Mammary epithelial cell (primary cell): ENCODE measurements at regions of chr18 and their contacts with region 1.

Region 1: DNA sequence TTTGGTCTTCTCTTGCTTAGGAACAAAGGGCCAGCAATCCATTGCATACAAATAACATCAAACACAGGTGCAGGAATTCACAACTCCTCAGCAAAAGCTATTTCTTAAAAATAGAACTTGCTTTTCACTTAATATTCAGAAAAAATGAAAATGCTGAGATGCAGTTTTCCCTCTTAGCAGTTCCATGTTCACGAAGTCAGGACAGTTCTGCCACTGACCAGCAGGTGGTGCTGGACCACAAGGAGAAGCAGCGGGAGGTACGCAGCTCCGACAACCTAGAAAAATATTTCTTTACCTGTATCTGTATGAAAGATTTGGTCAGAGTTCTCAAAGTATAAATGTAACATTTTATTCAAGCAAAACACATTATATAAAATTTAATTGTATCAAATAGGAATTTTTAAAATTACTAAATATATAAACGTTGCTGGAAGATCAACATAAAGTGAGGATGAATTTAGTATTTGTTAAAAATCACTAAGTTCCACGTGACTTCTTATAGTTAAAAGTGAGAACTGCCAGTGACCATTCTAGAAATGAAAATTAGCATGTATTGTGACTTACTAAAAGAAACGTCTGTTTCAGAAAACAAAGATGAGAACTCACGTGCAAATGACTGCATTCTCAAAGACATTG is 48.8 kb downstream of the ADNP2 start:
- DNase-seq: peak; percentile 48
- H3K4me3 ChIP-seq: no peak overlapping the region
- H3K27ac ChIP-seq: no peak overlapping the region
- H3K4me1 ChIP-seq: no peaks in the 10 kb centered on the region
- H3K27me3 ChIP-seq: no peaks in the 10 kb centered on the region
- CTCF ChIP-seq: peak; percentile 97 to 99

Region 2: DNA sequence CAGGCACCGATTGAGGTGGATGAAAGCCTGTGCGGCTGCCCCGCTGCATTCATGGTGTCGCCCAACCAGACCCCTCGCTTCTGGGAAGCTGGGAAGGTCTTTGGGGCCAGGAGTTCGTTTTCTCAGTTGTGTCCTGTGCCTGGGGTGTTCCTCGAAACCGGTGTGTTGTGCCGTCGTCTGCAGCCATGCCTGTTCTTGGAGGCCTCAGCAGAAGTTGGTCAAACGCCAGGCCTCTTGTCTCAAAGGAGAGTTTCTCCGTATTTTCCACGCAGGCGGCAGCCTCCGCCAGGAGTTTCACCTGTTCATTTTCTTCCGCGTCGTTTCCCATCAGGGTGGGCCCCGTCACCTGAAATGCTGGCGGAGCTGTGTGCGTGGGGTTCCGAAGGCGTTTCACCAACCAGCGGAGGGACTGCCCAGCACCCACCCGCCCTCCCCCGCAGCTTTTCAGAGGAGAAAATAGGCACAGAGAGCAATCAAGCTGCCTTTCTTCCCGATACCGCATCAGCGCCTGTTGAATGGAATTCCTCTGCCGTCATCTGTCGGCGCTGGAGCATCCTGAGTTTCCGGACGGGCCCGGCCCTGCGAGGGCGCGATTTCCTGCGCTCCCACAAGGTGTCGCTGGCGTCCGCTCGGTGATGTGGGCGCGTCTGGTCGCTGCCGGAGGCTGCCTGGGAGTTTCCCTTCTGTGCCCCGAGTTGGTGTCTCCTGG is 779.1 kb before region 1 on chr18:
- CTCF ChIA-PET with region 1: no interaction called
- dilution Hi-C with region 1: no loop called
- in situ Hi-C with region 1: no loop called
- intact Hi-C with region 1: loop called (anchors 1 kb)
- DNase-seq: peak; percentile 71
- H3K4me3 ChIP-seq: no peak overlapping the region
- H3K27ac ChIP-seq: no peak overlapping the region
- H3K4me1 ChIP-seq: no peaks in the 10 kb centered on the region
- H3K27me3 ChIP-seq: no peaks in the 10 kb centered on the region
- CTCF ChIP-seq: peak; percentile 80 to 97

Region 3: DNA sequence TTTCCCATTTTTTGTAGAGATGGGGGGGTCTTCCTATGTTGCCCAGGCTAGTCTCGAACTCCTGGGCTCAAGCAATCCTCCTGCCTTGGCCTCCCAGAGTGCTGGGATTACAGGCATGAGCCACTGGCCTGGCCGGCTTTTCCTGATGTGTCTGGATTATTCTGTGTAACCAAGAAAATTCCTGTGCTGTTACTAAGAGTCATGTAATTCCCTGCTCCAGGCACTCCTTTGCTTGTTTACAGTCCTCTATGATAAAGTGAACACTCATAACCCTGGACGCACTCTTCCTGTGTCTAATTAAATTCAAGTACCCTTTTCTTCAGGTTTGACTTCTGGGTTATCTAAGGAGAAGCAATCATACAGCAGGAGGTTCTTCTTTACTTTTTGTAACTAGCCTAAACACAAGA is 493.1 kb before region 1 on chr18:
- CTCF ChIA-PET with region 1: no interaction called
- dilution Hi-C with region 1: no loop called
- in situ Hi-C with region 1: no loop called
- intact Hi-C with region 1: no loop called
- DNase-seq: peak; percentile 66
- H3K4me3 ChIP-seq: no peak overlapping the region
- H3K27ac ChIP-seq: no peak overlapping the region
- H3K4me1 ChIP-seq: no peaks in the 10 kb centered on the region
- H3K27me3 ChIP-seq: peaks cover 3% of the 10 kb centered on the region
- CTCF ChIP-seq: no peak

Region 4: GRCh38 chr18:79790996-79791972 is 366.5 kb before region 1 on chr18:
- CTCF ChIA-PET with region 1: no interaction called
- dilution Hi-C with region 1: no loop called
- in situ Hi-C with region 1: no loop called
- intact Hi-C with region 1: loop called (anchors 10 kb)
- DNase-seq: peak; percentile 77
- H3K4me3 ChIP-seq: no peak overlapping the region
- H3K27ac ChIP-seq: no peak overlapping the region
- H3K4me1 ChIP-seq: peaks cover 22% of the 10 kb centered on the region
- H3K27me3 ChIP-seq: peaks cover 6% of the 10 kb centered on the region
- CTCF ChIP-seq: no peak

Region 5: GRCh38 chr18:80171054-80171872 is 13.4 kb after region 1 on chr18:
- CTCF ChIA-PET with region 1: no interaction called
- dilution Hi-C with region 1: no loop called
- in situ Hi-C with region 1: no loop called
- intact Hi-C with region 1: loop called (anchors 1 kb)
- DNase-seq: peak; percentile 38
- H3K4me3 ChIP-seq: peak overlapping the region in 1 of 3 experiments; percentile 30
- H3K27ac ChIP-seq: no peak overlapping the region
- H3K4me1 ChIP-seq: peaks cover 30% of the 10 kb centered on the region
- H3K27me3 ChIP-seq: no peaks in the 10 kb centered on the region
- CTCF ChIP-seq: peak; percentile 85 to 98

Region 6: GRCh38 chr18:80200171-80200931 is 42.5 kb after region 1 on chr18:
- CTCF ChIA-PET with region 1: no interaction called
- dilution Hi-C with region 1: no loop called
- in situ Hi-C with region 1: no loop called
- intact Hi-C with region 1: loop called (anchors 1 kb)
- DNase-seq: no peak
- H3K4me3 ChIP-seq: no peak overlapping the region
- H3K27ac ChIP-seq: no peak overlapping the region
- H3K4me1 ChIP-seq: peaks cover 17% of the 10 kb centered on the region
- H3K27me3 ChIP-seq: no peaks in the 10 kb centered on the region
- CTCF ChIP-seq: no peak

Region 7: DNA sequence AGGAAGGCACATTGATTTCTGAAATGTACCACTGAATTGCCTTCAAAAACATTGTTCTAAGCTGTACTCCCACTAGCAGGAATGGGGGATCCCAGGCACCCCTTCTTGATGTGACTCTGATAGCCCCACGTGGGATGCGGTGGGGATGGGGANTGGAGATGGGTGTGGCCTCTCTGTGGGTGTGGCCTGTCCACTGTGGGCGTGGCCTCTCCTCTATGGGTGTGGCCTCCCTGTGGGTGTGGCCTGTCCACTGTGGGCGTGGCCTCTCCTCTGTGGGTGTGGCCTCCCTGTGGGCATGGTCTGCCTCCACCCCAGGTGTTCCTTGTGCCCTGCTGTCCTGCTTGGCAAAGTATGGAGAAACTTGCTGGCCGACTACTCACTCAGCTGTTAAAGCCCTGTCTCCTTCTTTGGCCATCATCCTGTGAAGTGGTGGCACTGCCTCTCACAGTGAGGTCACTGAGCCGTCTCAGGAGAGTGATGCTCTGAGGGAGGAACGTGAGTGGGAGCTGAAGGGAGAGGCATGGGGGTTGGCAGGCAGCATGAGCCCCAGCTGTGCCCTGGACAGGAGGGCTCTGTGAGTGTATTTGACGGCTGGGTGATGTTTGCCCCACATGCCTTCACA is 96.2 kb after region 1 on chr18:
- CTCF ChIA-PET with region 1: no interaction called
- dilution Hi-C with region 1: no loop called
- in situ Hi-C with region 1: no loop called
- intact Hi-C with region 1: loop called (anchors 1 kb)
- DNase-seq: no peak
- H3K4me3 ChIP-seq: no peak overlapping the region
- H3K27ac ChIP-seq: no peak overlapping the region
- H3K4me1 ChIP-seq: peaks cover 28% of the 10 kb centered on the region
- H3K27me3 ChIP-seq: no peaks in the 10 kb centered on the region
- CTCF ChIP-seq: no peak